Mammary epithelial cell (primary cell): ENCODE measurements at regions of chr3 and their contacts with region 1.

Region 1: DNA sequence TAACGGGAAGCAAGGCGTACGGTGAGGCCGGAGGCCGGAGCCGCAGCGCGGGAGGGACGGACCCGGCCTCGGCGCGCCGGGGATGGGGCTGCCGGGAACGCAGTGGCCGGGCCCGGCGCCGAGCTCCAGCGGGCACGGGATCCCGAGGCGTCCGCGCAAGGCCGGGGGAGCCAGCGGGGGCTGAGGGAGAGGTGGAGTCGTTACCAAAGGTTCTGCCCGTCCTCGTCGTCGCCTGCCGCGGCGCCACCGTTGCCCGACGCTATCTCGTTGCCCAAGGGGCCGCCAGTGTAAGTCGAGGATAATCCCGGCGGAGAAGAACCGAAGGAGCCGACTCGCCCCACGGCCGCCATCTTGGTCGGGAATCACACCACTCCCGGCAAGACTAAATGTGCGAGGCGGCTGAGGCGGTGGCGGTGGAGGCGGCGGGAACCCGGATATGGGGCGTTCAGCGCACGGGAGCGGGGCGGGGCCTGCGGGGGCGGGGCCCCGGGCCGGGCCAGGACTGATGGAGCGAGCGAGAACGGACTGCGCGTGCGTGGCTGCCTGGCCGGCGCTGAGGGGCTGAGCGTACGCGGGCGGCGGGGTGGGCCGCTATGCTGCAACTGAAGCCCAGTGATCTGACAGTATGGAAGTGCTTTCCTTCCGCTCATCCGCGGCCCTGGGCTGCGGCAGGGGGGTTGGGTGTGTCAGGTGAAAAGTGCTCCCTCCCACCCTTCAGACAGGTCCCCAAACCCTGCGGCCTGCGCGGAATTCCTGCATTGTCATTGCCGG is at the start of gene DYNC1LI1:
- DNase-seq: peak; percentile 90
- H3K4me3 ChIP-seq: peak within 1 kb of the TSS; percentile 66 to 100 (median 78)
- H3K27ac ChIP-seq: peak within 1 kb of the TSS; percentile 84
- H3K4me1 ChIP-seq: peaks cover 13% of the 10 kb centered on the region
- H3K27me3 ChIP-seq: no peaks in the 10 kb centered on the region
- CTCF ChIP-seq: no peak
- total RNA-seq, gene DYNC1LI1: 30.2 to 43.8 TPM

Region 2: GRCh38 chr3:32510075-32510724 is 60.4 kb before region 1 on chr3:
- CTCF ChIA-PET with region 1: no interaction called
- dilution Hi-C with region 1: no loop called
- in situ Hi-C with region 1: no loop called
- intact Hi-C with region 1: loop called (anchors 2 kb)
- DNase-seq: peak; percentile 52
- H3K4me3 ChIP-seq: no peak overlapping the region
- H3K27ac ChIP-seq: no peak overlapping the region
- H3K4me1 ChIP-seq: no peaks in the 10 kb centered on the region
- H3K27me3 ChIP-seq: no peaks in the 10 kb centered on the region
- CTCF ChIP-seq: peak; percentile 63 to 79